Calu3 (cell line): ENCODE measurements at regions of chr5 and their contacts with region 1.

Region 1: DNA sequence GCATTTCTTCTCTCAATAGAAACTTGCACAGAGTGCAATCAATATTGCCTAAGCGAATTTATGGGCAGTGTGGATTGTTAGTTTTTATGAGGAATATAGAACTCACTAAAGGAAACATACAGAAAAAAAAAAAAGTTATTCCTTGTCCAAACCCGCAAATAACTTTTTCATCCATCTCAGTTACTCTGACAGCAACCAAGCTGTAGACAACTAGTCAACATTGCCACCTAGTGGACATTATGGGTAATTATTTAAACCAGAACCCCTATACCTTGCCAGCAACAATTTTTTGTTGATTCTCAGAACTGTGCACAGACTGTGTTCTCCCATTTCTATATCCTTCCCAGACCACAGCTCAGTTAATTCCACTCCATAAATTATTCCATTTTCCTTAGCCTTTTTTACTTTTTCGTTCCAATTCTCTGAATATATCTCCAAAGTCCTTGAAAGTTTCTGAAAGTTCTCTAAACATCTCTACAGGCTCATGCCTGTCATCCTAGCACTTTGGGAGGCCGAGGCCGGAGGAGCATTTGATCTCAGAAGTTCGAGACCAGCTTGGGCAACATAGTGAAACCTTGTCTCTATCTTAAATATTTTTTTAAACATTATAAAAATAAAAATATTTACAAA is 2.6 kb upstream of the AFAP1L1 start:
- DNase-seq: peak; percentile 18
- H3K4me3 Mint-ChIP-seq: no peak overlapping the region
- H3K27ac Mint-ChIP-seq: no peak overlapping the region
- H3K4me1 Mint-ChIP-seq: peaks cover 28% of the 10 kb centered on the region
- H3K27me3 Mint-ChIP-seq: no peaks in the 10 kb centered on the region
- CTCF ChIP-seq: peak; percentile 72

Region 2: DNA sequence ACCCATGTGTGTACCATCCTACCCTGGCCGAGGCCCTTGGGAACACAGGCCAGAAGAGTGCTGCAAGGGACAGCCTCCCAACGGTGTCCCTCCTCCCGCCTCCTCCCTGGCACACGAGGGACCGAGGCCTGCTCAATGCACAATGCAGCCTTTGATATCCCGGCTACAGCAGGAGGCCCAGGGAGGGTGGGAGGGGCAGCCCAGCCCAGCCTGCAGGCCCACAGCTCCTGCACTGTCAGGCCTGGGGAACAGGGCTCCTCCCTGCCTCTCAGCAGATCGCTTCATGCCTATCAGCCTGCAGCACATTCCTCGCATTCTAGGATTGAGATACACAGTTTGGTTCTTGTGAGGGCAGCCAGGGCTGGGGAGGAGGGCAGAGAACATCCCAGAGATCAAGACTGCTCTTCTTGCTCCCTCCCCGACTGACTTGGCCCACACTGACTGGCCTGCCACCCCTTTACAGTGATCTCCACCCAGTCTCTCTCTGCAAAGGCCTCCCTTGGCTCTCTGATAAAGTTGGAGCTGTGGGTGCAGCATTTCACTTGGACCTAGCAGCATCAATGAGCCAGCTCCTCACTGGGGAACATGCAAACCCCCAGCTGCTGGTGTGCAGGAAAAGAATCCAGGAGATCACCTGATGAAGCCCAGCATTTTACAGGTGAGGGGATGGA is 205.9 kb before region 1 on chr5 and contains the start of gene SH3TC2:
- CTCF ChIA-PET with region 1: no interaction called
- intact Hi-C with region 1: loop called (anchors 5 kb)
- DNase-seq: peak; percentile 90
- H3K4me3 Mint-ChIP-seq: peak within 1 kb of the TSS; percentile 66
- H3K27ac Mint-ChIP-seq: peak within 1 kb of the TSS; percentile 97
- H3K4me1 Mint-ChIP-seq: peaks cover 72% of the 10 kb centered on the region
- H3K27me3 Mint-ChIP-seq: no peaks in the 10 kb centered on the region
- CTCF ChIP-seq: no peak
- total RNA-seq, gene SH3TC2: 54.6 and 60.3 TPM in 2 replicates

Region 3: DNA sequence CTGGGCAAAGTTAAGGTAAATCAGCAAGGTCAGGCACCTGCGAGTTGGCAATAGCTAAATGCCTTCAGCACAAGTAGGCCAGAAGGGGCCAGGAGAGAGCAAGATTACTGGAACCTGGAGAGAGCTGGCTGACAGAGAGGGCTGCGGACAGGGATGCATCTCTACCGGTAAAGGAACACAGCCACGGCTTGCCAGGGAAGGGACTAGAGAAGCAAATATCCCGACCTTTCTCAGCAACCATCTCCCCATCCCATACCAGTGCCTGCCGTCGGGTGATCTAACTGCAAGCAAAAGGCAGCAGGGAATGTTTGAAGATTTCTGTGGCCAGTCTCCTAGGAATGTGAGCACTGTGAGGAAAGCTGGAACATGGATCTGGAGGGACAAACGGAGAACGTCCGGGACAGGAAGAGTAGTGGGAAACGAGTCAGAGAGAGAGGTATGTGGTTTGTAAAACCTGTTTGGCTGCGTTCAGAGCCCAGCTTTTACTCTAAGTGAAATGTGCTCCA is 143.6 kb before region 1 on chr5:
- CTCF ChIA-PET with region 1: interaction called, 17 read pairs
- intact Hi-C with region 1: loop called (anchors 1 kb)
- DNase-seq: peak; percentile 76
- H3K4me3 Mint-ChIP-seq: peak overlapping the region; percentile 62
- H3K27ac Mint-ChIP-seq: peak overlapping the region; percentile 74
- H3K4me1 Mint-ChIP-seq: peaks cover 65% of the 10 kb centered on the region
- H3K27me3 Mint-ChIP-seq: no peaks in the 10 kb centered on the region
- CTCF ChIP-seq: peak; percentile 49